Heart right ventricle (tissue), 16 donors: ENCODE measurements at regions of chr5 and their contacts with region 1.

Region 1: DNA sequence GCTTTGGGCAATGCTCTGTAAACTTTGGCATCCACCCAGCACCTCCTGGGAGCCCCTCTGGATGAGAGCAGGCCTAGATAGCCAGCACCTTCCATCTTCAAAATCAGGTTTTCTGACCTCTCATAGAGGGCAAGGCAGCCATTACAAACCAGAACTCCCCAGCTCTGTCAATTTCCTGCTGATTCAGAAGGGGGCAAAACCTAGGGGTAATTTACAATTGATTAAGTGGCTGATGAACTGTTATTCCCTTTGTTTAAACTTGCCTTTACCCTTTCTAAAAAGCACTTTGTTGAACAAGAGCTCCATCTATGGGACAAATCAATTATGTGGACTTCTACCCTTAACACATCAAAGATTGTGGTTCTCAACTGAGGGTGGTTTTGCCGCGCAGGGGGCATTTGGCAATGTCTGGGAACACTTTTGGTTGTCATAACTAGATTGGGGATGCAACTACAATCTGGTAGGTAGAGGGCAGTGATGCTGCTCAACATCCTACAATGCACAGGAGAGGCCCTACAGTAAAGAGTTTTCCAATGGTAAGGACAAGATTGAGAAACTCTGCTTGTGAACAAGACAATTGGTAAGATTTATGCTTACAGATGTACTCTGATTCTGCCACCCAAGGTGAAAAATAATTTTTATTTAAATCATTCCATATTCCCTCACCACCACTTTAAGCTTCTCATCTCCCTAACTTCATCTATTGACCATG is 184.1 kb downstream of the MARCHF11 start:
- DNase-seq: no peak
- ATAC-seq: peak; percentile 25 to 79 (median 60)
- H3K4me3 ChIP-seq: no peak overlapping the region
- H3K27ac ChIP-seq: no peak overlapping the region
- H3K4me1 ChIP-seq: peaks cover 0 to 10% (median 0%) of the 10 kb centered on the region in 9 donors
- H3K27me3 ChIP-seq: no peaks in the 10 kb centered on the region
- CTCF ChIP-seq: peak; percentile 35 to 77 (median 67)

Region 2: GRCh38 chr5:15285901-15286583 is 709.5 kb before region 1 on chr5:
- intact Hi-C with region 1: loop called in 3 of 10 experiments (anchors 10 kb)
- DNase-seq: peak in 1 of 2 donors; percentile 32
- ATAC-seq: peak; percentile 38 to 85 (median 82)
- H3K4me3 ChIP-seq: no peak overlapping the region
- H3K27ac ChIP-seq: no peak overlapping the region
- H3K4me1 ChIP-seq: peaks cover 0 to 9% (median 0%) of the 10 kb centered on the region in 9 donors
- H3K27me3 ChIP-seq: no peaks in the 10 kb centered on the region
- CTCF ChIP-seq: no peak

Region 3: GRCh38 chr5:15383469-15383868 is 612.0 kb before region 1 on chr5:
- intact Hi-C with region 1: loop called in 2 of 10 experiments (anchors 5 to 10 kb)
- DNase-seq: no peak
- ATAC-seq: peak in 1 of 8 donors; percentile 52
- H3K4me3 ChIP-seq: no peak overlapping the region
- H3K27ac ChIP-seq: no peak overlapping the region
- H3K4me1 ChIP-seq: no peaks in the 10 kb centered on the region
- H3K27me3 ChIP-seq: no peaks in the 10 kb centered on the region
- CTCF ChIP-seq: peak in 8 of 9 donors; percentile 14 to 57 (median 41)

Region 4: GRCh38 chr5:15452781-15453180 is 542.7 kb before region 1 on chr5:
- intact Hi-C with region 1: loop called in 1 of 10 experiments (anchors 10 kb)
- DNase-seq: no peak
- ATAC-seq: no peak
- H3K4me3 ChIP-seq: no peak overlapping the region
- H3K27ac ChIP-seq: no peak overlapping the region
- H3K4me1 ChIP-seq: peaks cover 0 to 7% (median 0%) of the 10 kb centered on the region in 9 donors
- H3K27me3 ChIP-seq: no peaks in the 10 kb centered on the region
- CTCF ChIP-seq: no peak

Region 5: DNA sequence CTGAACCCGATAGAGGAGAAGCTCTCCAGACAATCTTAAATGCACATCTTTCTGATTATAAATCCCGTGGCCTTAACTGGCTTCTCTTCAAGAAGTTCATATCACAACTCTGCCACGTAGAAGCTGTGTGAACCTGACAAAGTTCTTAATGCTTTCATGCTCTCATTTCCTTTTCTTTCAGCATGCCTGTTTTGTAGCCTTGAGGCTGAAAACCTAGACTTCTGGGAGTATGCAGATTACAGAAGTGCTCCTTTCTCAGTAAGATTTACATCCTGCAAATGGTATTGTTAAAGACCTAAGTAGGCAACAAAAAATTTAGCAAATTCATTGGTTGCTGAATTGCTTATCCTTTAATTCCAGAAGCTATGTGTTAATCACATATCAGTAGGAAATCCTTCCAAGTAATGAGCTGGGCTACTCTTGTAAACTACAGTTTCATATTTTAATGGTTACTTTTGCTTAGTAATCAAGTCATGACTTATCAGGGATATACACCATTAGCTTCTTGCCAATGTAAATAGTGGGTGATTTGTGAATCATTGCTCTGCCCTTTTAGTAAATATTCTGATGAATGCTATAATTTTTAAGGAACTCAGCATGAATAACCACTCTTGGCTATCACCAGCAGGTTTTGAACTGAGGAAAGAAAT is 160.8 kb before region 1 on chr5:
- intact Hi-C with region 1: loop called in 7 of 10 experiments (anchors 10 kb)
- DNase-seq: no peak
- ATAC-seq: peak in 1 of 8 donors; percentile 65
- H3K4me3 ChIP-seq: no peak overlapping the region
- H3K27ac ChIP-seq: peak overlapping the region in 2 of 10 donors; percentile 8 to 27
- H3K4me1 ChIP-seq: peaks cover 0 to 62% (median 38%) of the 10 kb centered on the region in 9 donors
- H3K27me3 ChIP-seq: no peaks in the 10 kb centered on the region
- CTCF ChIP-seq: no peak